Activated naive CD4-positive, alpha-beta T cell treated with anti-CD3 and anti-CD28 coated beads for 36 hours (primary cell): ENCODE measurements at regions of chr17 and their contacts with region 1.

Region 1: GRCh38 chr17:76278952-76279741 is 14.0 kb downstream of the UBALD2 start:
- DNase-seq: peak; percentile 91
- H3K4me3 Mint-ChIP-seq: no peak overlapping the region
- H3K27ac Mint-ChIP-seq: no peak overlapping the region
- H3K4me1 Mint-ChIP-seq: peaks cover 28% of the 10 kb centered on the region
- H3K27me3 Mint-ChIP-seq: no peaks in the 10 kb centered on the region

Region 2: DNA sequence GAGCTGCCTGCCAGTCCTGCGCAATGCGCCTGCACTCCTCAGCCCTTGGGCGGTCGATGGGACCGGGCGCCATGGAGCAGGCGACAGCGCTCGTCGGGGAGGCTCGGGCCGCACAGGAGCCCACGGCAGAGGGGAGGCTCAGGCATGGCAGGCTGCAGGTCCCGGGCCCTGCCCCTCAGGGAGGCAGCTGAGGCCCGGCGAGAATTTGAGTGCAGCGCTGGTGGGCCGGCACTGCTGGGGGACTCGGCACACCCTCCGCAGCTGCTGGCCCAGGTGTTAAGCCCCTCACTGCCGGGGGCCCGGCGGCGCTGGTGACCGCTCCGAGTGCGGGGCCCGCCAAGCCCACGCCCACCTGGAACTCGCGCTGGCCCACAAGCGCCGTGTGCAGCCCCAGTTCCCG is 1372.1 kb before region 1 on chr17:
- CTCF ChIA-PET with region 1: no interaction called
- intact Hi-C with region 1: no loop called
- DNase-seq: no peak
- H3K4me3 Mint-ChIP-seq: no peak overlapping the region
- H3K27ac Mint-ChIP-seq: no peak overlapping the region
- H3K4me1 Mint-ChIP-seq: no peaks in the 10 kb centered on the region
- H3K27me3 Mint-ChIP-seq: no peaks in the 10 kb centered on the region

Region 3: GRCh38 chr17:76121932-76122430 is 157.2 kb before region 1 on chr17:
- CTCF ChIA-PET with region 1: interaction called, 243 read pairs
- intact Hi-C with region 1: loop called (anchors 1 kb)
- DNase-seq: peak; percentile 39
- H3K4me3 Mint-ChIP-seq: peak overlapping the region; percentile 21
- H3K27ac Mint-ChIP-seq: peak overlapping the region; percentile 80
- H3K4me1 Mint-ChIP-seq: peaks cover 19% of the 10 kb centered on the region
- H3K27me3 Mint-ChIP-seq: no peaks in the 10 kb centered on the region

Region 4: DNA sequence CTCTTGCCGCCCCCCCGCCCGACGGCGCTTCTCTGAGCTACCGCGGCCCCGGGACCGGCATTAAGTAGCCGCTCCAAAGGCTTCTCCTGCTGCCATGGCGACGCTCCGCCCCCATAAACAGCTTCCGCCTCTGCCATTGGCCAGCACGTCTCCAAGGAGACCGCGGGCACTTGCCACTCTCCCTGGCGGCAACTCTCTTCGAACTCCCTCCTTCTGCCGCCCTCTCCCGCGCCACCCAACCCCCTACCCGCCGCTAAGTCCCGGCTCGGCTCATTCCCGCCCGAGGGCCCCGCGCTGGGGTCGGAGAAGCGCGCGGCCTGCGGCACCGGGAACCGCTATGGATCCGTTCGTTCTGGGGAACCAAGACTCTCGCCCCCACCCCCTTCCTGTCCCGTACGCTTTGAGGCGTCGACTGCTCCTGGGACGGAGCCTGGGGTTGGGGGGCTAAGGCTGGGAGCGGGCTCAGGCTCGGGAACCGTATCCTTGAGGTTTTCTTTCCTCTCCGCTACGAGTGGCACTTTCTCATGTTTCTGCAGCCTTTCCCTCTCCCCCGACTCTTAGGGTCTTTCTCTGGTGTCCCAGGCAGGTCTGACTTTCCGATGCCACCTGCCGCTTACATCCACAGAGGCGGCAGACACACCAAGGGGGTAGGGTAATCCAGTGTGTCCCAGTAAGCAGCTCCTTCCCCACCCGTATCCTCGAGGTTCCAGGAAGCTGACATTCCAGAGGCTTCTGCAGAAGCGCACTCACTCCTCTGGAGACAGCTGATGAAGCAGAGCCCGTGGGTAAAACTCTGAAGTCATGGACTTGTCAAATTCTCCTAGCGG is 137.7 kb before region 1 on chr17 and contains the start of gene FOXJ1:
- CTCF ChIA-PET with region 1: interaction called, 19 read pairs
- intact Hi-C with region 1: no loop called
- DNase-seq: peak; percentile 92
- H3K4me3 Mint-ChIP-seq: peak within 1 kb of the TSS; percentile 72
- H3K27ac Mint-ChIP-seq: no peak within 1 kb of the TSS
- H3K4me1 Mint-ChIP-seq: peaks cover 58% of the 10 kb centered on the region
- H3K27me3 Mint-ChIP-seq: peaks cover 2% of the 10 kb centered on the region
- total RNA-seq, gene FOXJ1: 0.60 to 0.84 TPM

Region 5: DNA sequence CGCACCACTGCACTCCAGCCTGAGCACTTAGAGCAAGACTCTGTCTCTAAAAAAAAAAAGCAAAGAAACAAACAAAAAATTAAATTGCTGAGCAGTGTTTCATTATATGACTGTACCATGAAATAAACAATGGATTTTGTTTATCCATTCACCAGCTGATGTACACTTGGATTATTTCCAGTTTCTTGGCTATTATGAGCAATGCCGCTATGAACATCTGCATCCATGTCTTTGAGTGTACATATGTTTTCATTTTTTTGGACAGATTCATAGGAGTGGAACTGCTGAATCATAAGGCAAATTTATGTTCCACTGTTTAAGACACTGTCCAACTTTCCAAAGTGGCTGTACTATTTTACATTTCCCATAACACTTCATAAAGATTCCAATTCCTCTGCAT is 46.8 kb before region 1 on chr17:
- CTCF ChIA-PET with region 1: no interaction called
- intact Hi-C with region 1: no loop called
- DNase-seq: no peak
- H3K4me3 Mint-ChIP-seq: no peak overlapping the region
- H3K27ac Mint-ChIP-seq: no peak overlapping the region
- H3K4me1 Mint-ChIP-seq: peaks cover 55% of the 10 kb centered on the region
- H3K27me3 Mint-ChIP-seq: no peaks in the 10 kb centered on the region

Region 6: DNA sequence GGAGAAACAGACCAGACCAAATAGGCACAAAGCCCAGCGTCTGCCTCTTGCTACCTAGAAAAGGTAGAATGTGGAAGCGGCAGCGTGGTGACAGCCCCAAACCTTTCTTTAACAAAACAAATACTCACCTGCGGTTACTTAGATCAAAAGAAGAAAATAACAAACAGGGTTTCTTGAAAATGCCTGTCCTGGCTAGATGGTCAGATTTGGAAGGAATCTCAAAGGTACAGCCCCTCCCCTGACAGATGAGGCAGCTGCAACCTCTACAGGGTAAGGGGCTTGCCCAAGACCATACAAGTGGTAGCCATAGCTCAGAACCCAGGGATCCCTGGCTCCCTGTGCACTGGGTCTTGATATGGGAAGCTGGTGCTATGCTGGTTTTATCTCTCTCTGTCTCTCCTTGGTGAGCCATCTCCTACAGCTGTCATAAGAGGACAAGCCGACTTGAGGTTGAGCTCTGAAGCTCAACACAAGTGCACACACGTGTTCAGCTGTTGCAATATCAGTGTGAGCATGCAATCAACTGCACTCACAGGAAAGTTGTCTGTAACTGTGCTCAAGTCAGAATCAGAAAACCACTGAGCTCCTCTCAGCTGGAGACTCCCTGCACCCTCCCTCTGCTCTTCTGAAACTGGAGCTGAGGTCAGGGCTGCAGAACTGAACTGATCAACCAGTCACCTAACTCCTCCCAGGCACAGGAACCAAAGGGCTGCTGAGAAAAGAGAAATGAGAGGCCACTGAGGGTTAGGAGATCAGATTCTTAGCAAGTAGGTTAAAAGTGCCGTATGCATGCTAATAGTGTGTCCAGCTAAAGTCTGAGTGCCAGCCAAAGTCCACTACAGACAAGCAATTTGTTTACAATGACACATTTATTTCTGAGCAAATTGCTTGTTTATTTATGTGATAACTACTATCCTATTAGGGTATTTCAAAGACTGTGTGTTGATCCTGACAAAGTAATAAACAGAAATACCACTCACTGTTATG is 32.8 kb before region 1 on chr17:
- CTCF ChIA-PET with region 1: interaction called, 15 read pairs
- intact Hi-C with region 1: no loop called
- DNase-seq: peak; percentile 86
- H3K4me3 Mint-ChIP-seq: peak overlapping the region; percentile 55
- H3K27ac Mint-ChIP-seq: peak overlapping the region; percentile 79
- H3K4me1 Mint-ChIP-seq: peaks cover 69% of the 10 kb centered on the region
- H3K27me3 Mint-ChIP-seq: no peaks in the 10 kb centered on the region

Region 7: GRCh38 chr17:76296186-76296585 is 17.0 kb after region 1 on chr17:
- CTCF ChIA-PET with region 1: interaction called, 23 read pairs
- intact Hi-C with region 1: no loop called
- DNase-seq: no peak
- H3K4me3 Mint-ChIP-seq: no peak overlapping the region
- H3K27ac Mint-ChIP-seq: no peak overlapping the region
- H3K4me1 Mint-ChIP-seq: peaks cover 2% of the 10 kb centered on the region
- H3K27me3 Mint-ChIP-seq: no peaks in the 10 kb centered on the region